Head of caudate nucleus (tissue), 42 donors: ENCODE measurements at regions of chr1 and their contacts with region 1.

Region 1: DNA sequence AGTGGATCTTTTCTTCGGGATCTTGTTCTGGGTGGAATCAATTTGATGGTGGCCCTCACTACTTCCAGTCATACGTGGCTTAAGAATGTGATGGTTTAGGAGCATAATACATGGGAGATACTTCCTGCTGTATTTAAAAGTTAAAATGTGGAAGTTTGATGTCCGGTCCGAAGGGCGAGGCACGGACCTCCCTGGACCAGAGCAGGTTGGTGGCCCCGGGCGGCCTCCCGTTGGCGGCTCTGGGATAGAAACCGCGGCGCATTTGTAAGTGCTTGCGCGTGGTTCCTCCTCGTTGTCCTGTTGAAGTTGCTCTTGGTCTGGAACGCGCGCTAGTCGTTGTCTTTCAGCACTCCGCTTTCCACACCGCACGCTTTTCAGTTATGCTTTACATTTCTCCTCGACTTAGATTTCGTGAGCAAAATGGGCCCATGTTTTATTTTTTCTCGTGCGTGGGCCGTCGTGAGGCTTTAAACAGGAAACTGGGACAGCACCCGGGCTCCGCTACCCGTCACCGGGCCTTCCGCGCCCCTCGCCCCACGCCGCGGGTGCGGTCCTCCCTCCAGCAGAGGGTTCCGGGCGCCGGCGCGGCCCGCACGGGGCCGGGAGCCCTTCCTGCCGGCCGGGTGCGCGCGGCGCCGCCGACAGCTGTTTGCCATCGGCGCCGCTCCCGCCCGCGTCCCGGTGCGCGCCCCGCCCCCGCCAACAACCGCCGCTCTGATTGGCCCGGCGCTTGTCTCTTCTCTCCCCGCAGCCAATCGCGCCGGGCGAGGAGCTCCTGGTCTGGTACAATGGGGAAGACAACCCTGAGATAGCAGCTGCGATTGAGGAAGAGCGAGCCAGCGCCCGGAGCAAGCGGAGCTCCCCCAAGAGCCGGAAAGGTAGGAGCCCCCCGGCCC is 48.9 kb downstream of the PRDM2 start:
- DNase-seq: peak; percentile 96 to 99 (median 98)

Region 2: DNA sequence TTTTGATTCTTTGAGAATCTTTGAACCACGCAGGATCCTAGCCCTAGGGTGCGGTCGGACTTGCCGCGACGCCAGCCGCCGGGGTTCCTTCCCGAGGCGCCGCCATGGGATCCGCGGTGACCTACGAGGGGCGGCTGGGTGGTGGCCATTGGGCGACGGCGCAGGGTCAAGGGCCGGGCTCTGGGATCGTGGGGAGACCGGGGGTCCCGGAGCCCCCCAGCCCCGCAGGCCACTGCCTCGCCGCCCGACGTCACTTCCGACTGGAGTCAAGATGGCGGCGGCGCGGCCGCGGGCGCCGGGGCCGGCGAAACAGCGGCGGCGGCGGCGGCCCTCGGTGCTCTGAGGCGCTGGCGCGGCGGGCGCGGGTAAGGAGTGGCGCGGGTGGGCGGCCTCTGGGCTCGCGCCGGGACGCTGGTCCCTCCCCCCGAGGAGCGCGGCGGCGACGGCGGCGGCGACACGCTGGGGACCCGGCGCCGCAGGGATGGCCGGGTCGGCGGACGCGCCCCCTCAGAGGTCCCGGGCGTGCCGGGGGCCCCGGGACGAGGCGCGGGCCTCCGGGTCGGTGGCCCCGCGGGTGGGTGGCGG is 48.8 kb before region 1 on chr1 and contains the start of gene PRDM2:
- intact Hi-C with region 1: loop called (anchors 5 kb)
- DNase-seq: peak in 40 of 42 donors; percentile 7 to 77 (median 56)